ENCODE measurements at regions of chr3 and their contacts with region 1.

Region 1: GRCh38 chr3:38136777-38137614 is at the start of gene ACAA1:
- DNase-seq: peak; percentile 99 to 100 (median 99)
- ATAC-seq: peak; percentile 95
- H3K4me3 ChIP-seq: peak within 1 kb of the TSS; percentile 90
- H3K27ac ChIP-seq: peak within 1 kb of the TSS; percentile 83
- H3K4me1 ChIP-seq: peaks cover 18 to 33% of the 10 kb centered on the region in 2 experiments; a peak in 4 of 5 replicates
- H3K27me3 ChIP-seq: no peaks in the 10 kb centered on the region; a peak in 1 of 5 replicates
- CTCF ChIP-seq: no peak
- EP300 ChIP-seq: no peak
- POLR2A ChIP-seq: peak; percentile 94
- RAD21 ChIP-seq: no peak
- polyA plus RNA-seq, gene ACAA1: 4.0 to 7.9 TPM

Region 2: DNA sequence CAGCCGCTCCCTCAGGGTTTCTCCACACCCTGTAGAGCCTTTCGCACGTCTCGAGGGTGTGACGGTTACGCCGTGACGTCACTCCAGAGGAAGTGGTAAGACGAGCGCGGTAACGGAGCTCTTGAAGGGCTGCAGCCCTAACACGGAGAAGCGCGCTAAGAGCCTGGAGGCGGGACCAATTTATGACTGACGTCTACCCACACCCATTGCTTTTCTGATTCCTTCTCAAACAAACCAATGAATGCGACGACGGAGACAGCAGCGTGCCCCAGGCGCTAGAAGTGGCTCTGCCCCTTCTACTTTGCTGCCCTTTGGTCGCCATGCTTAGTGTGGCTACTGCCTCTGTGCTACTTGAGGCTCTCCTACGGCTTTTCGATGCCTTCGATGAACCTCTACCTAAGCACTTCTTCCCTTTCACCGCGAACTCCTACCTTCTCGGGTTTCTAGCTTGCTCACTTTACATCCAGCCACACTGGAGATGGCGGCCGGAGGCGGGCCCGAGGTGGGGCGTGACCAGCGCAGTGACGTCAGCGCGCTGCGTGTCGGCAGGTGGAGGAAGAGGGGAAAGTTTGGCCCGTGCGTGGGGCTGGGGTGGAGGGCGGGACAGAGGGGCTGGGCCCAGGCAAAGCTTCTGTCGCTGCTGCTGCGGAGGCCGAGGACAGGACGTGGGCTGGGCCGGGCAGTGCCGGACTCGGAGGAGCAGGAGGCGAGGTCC is 28.1 kb after region 1 on chr3 and contains the start of gene OXSR1:
- CTCF ChIA-PET with region 1: no interaction called
- POLR2A ChIA-PET with region 1: interaction called, 55 read pairs
- in situ Hi-C with region 1: no loop called
- intact Hi-C with region 1: loop called (anchors 1 kb)
- DNase-seq: peak; percentile 96 to 100 (median 97)
- ATAC-seq: peak; percentile 91
- H3K4me3 ChIP-seq: peak within 1 kb of the TSS; percentile 91
- H3K27ac ChIP-seq: peak within 1 kb of the TSS; percentile 98
- H3K4me1 ChIP-seq: peaks cover 22 to 35% of the 10 kb centered on the region in 2 experiments
- H3K27me3 ChIP-seq: no peaks in the 10 kb centered on the region
- CTCF ChIP-seq: peak in 1 of 3 experiments; percentile 12; a peak in 1 of 6 replicates
- EP300 ChIP-seq: peak; percentile 61; the same call in 1 of the 2 replicates
- POLR2A ChIP-seq: peak; percentile 86
- RAD21 ChIP-seq: no peak
- polyA plus RNA-seq, gene OXSR1: 15.7 to 19.8 TPM

Region 3: DNA sequence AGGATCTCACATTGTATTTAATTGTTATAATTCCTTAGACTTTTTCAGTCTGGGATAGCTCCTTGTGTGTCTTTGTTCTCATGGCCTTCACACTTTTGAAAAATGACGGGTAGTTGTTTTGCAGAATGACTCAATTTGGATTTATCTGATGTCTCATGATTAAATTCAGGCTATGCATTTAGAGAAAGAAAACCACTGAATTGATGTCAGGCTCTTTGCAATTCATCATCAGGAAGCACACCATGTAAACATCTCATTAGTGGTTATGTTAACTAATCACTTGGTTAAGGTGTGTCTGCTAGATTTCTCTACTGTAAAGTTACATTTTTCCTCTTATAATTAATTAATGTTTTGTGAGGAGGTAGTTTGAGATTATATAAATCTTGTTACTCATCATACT is 120.6 kb after region 1 on chr3:
- CTCF ChIA-PET with region 1: no interaction called
- POLR2A ChIA-PET with region 1: interaction called, 4 read pairs
- in situ Hi-C with region 1: no loop called
- intact Hi-C with region 1: loop called (anchors 10 kb)
- DNase-seq: no peak
- ATAC-seq: no peak
- H3K4me3 ChIP-seq: no peak overlapping the region
- H3K27ac ChIP-seq: no peak overlapping the region
- H3K4me1 ChIP-seq: 0 out of 5 replicates have a peak, but pooled peaks cover 0 to 3% of the 10 kb centered on the region in 2 experiments
- H3K27me3 ChIP-seq: no peaks in the 10 kb centered on the region
- CTCF ChIP-seq: no peak
- EP300 ChIP-seq: no peak; the same call in 1 of the 2 replicates
- POLR2A ChIP-seq: no peak
- RAD21 ChIP-seq: no peak

Region 4: DNA sequence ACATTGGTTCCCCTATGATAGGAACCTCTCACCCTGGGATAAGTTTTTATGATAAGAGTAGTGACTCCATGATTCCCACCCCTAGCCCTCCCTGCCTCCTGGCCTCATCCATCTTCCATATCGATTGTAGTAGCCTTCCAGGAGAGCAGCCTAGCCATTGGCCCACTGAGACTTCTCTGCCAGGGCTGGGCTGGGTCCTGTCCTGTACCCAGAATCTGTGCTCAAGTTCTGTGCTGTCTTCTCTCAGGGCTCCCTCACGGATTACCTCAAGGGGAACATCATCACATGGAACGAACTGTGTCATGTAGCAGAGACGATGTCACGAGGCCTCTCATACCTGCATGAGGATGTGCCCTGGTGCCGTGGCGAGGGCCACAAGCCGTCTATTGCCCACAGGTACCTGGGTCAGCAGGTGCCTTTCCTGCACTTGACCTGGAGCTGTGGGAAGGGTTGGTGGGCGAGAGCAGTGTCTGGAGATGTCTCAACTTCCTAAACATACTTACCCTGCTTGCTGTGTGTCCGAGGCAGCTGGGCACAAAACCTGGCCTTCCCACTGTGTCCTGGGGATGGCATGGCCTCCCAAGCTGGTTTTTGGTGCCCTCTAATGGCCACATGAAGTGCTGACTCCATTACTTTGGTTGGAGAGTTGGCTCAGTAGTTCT is 342.6 kb after region 1 on chr3:
- CTCF ChIA-PET with region 1: no interaction called
- POLR2A ChIA-PET with region 1: no interaction called
- in situ Hi-C with region 1: loop called (anchors 10 kb)
- intact Hi-C with region 1: loop called (anchors 5 kb)
- DNase-seq: peak; percentile 64 to 73 (median 70)
- ATAC-seq: peak; percentile 88
- H3K4me3 ChIP-seq: no peak overlapping the region
- H3K27ac ChIP-seq: no peak overlapping the region
- H3K4me1 ChIP-seq: peaks cover 0 to 3% of the 10 kb centered on the region in 2 experiments; a peak in 1 of 5 replicates
- H3K27me3 ChIP-seq: no peaks in the 10 kb centered on the region
- CTCF ChIP-seq: peak; percentile 80 to 91 (median 86)
- EP300 ChIP-seq: no peak
- POLR2A ChIP-seq: no peak
- RAD21 ChIP-seq: peak; percentile 85 to 87

Measured in K562 (cell line).